ENCODE measurements at regions of chr12 and their contacts with region 1.

Region 1: GRCh38 chr12:84874125-84874824 is 38.3 kb downstream of the SLC6A15 start:
- DNase-seq: no peak
- ATAC-seq: peak; percentile 46 to 60
- H3K4me3 ChIP-seq: no peak overlapping the region
- H3K27ac ChIP-seq: no peak overlapping the region
- H3K4me1 ChIP-seq: no peaks in the 10 kb centered on the region
- H3K27me3 ChIP-seq: no peaks in the 10 kb centered on the region

Region 2: DNA sequence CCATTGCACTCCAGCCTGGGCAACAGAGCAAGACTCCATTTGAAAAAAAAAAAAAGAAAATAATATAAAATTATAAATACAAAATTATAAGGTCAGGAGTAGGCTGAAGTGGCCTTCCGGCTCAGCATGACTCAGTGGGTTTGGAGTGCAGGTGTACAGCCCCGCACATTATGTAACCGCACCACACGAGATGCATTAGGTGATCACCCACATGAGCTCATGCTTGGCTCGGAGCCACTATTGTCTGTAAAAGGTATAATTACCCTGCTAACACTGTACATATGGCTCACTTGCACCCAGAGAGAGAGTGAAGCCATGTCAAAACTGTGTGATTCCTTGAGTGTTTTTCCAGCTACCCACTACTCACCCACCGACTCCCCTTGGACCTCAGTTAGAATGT is 518.7 kb before region 1 on chr12:
- intact Hi-C with region 1: no loop called
- DNase-seq: no peak
- ATAC-seq: no peak
- H3K4me3 ChIP-seq: no peak overlapping the region
- H3K27ac ChIP-seq: no peak overlapping the region
- H3K4me1 ChIP-seq: no peaks in the 10 kb centered on the region
- H3K27me3 ChIP-seq: no peaks in the 10 kb centered on the region

Region 3: DNA sequence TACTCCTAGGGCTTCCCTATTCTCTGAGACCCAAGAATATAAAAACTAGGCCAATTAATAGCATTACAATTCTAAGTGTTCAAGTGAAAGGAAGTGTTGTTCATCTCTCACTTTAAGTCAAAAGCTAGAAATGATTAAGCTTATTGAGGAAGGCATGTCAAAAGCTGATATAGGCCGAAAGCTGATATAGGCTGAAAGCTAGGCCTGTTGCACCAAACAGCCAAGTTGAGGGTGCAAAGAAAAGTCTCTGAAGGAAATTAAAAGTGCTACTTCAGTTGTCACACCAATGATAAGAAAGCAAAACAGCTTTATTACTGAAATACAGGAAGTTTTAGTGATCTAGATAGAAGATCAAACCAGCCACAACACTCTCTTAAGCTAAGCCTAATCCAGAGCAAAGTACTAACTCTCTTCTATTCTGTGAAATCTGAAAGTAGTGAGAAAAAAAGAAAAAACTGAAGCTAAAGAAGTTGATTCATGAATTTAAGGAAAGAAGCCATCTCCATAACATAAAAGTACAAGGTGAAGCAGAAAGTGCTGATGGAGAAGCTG is 30.6 kb before region 1 on chr12:
- intact Hi-C with region 1: loop called in 1 of 4 experiments (anchors 2 kb)
- DNase-seq: no peak
- ATAC-seq: no peak
- H3K4me3 ChIP-seq: no peak overlapping the region
- H3K27ac ChIP-seq: no peak overlapping the region
- H3K4me1 ChIP-seq: no peaks in the 10 kb centered on the region
- H3K27me3 ChIP-seq: no peaks in the 10 kb centered on the region

Region 4: DNA sequence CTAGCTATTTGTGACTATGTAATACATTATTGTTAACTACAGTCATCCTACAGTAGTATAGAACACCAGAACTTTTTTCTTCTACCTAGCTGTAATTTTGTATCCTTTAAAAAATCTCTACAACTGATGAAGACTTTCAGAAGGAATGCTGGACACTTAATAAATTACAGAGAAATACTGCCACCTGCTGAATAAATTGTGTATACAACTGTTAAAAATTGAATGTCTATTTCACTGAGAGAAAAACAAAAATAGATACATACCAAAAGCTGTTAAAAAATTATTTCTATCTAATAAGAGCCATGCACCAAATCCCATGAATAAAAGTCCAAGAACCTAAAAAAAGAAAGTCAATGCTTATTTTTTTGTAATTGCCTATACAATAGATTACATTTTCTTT is 155.2 kb after region 1 on chr12:
- intact Hi-C with region 1: loop called in 3 of 4 experiments (anchors 5 kb)
- DNase-seq: no peak
- ATAC-seq: no peak
- H3K4me3 ChIP-seq: no peak overlapping the region
- H3K27ac ChIP-seq: no peak overlapping the region
- H3K4me1 ChIP-seq: no peaks in the 10 kb centered on the region
- H3K27me3 ChIP-seq: no peaks in the 10 kb centered on the region

Region 5: DNA sequence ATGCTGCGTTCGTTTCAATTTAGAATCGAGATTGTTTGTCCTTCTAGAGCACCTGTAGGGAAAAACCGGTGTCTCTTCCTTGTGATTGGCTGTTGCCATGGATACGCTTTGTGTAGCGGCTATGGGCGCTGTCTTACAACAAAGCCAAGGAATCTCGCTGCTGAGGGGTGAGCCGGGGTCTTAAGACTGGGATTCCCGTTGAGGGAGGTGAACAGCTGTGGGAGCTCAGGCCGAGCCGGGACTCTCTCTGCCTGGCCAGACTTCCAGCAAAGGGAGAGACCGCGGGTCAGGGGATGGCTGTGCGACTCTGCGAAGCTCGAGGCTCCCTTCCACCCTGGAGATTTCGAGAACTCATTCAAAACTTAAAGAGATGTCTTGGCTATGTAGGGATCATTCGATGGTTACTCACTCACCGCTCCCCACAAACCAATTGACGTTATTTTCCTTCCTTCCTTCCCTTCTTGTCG is 162.0 kb after region 1 on chr12 and contains the starts of genes LRRIQ1 and TSPAN19:
- intact Hi-C with region 1: loop called in 1 of 4 experiments (anchors 5 kb)
- DNase-seq: peak; percentile 43 to 67 (median 59)
- ATAC-seq: peak; percentile 90 to 93
- H3K4me3 ChIP-seq: peak within 1 kb of the TSS; percentile 87
- H3K27ac ChIP-seq: no peak within 1 kb of the TSS
- H3K4me1 ChIP-seq: no peaks in the 10 kb centered on the region
- H3K27me3 ChIP-seq: no peaks in the 10 kb centered on the region
- total RNA-seq, gene LRRIQ1: 0.17 to 0.48 (median 0.46) TPM
- total RNA-seq, gene TSPAN19: 0.85 TPM in 1 of 4 donors, not detected in the others